ENCODE measurements at regions of chr22 and their contacts with region 1.

Region 1: DNA sequence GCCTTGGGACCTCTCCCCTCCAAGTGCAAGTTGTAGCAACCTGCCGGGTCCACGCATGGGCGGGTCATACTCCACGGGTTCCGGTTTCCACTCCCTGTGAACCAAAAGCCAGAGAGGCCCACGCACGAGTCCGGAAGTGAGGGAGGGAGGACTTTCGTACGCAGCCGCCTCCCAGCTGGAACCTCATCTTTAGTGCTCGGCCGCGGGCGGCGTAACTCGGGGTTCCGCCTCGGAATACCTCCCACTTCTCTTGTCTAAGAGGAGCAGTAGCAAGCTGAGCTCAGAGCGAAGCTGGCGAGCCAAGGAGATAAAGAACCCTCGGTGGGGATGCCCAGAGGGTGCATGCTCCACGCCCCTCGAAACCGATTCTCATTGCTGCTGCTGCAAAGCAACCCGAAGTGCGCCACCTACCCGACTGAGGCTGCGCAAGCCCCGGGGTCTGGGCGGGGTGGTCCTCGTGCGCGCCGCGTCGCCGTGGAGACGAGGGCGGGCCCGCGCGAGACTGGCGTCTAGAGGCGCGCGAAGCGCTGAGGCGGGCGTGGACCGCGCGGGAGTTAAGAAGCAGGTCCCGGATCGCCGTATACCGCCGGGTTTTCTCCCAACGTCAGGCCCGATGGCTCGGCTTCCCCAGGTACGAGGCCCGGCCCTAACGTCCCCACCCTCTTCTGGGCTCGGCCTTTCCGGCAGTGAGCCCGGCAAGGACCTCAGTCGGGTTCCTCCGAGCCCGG is at the start of gene SFI1:
- DNase-seq: peak; percentile 95
- H3K4me3 Mint-ChIP-seq: peak within 1 kb of the TSS; percentile 94
- H3K27ac Mint-ChIP-seq: peak within 1 kb of the TSS; percentile 94
- H3K4me1 Mint-ChIP-seq: peaks cover 55% of the 10 kb centered on the region
- H3K27me3 Mint-ChIP-seq: no peaks in the 10 kb centered on the region
- total RNA-seq, gene SFI1: 147 to 155 TPM

Region 2: DNA sequence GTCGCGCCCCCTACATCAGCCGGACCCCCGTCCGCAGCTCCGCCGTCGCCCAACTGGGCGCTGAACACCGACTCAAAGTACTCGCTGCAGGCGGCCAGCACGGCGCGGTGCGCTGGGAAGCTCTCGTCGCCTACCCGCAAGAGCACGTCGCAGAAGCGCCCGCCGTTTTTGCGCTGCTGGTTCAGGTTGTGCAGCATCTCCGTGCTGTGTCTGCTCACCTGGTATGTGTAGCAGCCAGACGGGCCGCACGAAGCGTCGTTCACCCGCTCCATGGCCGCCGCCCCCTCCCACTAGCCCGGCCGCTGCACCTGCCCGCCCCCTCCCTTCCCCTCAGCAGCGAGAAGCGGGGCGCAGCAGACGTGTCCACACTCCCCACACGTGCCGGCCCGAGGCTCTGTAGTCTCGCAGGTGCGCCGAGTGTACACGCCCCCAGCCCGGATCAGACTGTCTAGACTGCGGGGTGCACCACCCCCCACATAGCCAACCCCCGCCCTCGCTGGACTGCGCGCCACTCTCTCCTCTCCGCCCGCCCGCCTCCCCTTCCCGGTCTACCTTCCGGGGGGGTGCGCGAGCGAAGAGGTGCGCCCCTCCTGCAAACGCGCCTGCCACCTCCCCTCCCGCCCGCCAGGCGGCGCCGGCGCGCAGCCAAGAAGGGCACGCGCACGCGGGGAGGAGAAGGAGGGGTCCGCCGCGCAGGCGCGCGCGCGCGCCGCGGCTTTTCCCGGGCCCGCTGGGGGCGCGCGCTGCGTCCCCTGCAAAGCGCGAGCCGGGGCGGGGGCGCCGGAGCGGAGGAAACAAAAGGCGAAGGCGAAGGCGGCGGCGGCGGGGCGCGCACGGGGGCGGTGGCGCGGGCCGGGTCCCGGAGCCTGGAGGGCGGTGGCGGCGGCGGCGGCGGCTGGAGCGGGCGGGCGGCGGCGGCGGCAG is 150.6 kb before region 1 on chr22:
- CTCF ChIA-PET with region 1: no interaction called
- intact Hi-C with region 1: loop called (anchors 2 kb)
- DNase-seq: peak; percentile 86
- H3K4me3 Mint-ChIP-seq: peak overlapping the region; percentile 90
- H3K27ac Mint-ChIP-seq: peak overlapping the region; percentile 94
- H3K4me1 Mint-ChIP-seq: peaks cover 42% of the 10 kb centered on the region
- H3K27me3 Mint-ChIP-seq: no peaks in the 10 kb centered on the region

Region 3: DNA sequence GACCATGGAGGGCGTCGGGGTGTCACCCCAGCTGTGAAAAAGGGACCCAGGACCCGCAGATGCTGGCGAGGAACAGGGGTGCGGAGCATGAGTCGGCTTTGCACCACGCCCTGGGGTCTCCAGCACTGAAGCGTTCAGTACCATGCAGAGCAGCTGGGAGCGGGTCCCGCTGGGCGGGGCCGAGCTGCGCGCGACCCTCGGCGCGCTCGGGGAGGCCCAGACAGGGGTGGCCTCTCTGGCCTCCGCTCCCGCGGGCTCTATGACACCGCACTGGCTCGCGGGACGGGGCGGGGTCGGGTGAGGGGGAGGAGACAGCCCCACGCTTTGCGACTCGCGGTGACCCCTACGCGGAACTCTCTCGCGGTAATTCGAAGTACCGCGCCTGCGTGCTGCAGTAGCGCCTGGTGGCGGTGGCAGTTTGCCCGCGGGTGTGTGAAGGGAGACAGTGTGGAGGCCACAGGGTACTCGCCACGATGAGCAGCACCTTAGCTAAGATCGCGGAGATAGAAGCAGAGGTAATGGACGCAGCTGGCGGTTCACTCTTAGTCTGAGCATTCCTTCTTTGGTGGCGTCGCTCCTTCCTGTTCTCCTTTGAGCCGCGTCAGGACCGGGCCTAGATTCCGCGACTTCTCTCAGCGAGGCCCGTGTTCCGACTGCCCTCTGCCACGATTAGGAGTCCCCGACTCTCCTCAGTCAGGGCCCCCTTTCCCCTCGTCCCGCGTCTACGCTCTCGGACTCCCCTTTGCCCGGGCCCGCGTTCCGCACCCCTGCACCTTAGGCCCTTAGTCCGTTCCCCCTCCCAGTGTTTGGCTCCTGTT is 96.8 kb before region 1 on chr22 and contains the start of gene DRG1:
- CTCF ChIA-PET with region 1: no interaction called
- intact Hi-C with region 1: loop called (anchors 5 kb)
- DNase-seq: peak; percentile 98
- H3K4me3 Mint-ChIP-seq: peak within 1 kb of the TSS; percentile 92
- H3K27ac Mint-ChIP-seq: peak within 1 kb of the TSS; percentile 82
- H3K4me1 Mint-ChIP-seq: peaks cover 21% of the 10 kb centered on the region
- H3K27me3 Mint-ChIP-seq: no peaks in the 10 kb centered on the region
- total RNA-seq, gene DRG1: 77.1 to 78.7 TPM

Region 4: GRCh38 chr22:31509061-31509762 is 13.0 kb after region 1 on chr22:
- CTCF ChIA-PET with region 1: no interaction called
- intact Hi-C with region 1: no loop called
- DNase-seq: no peak
- H3K4me3 Mint-ChIP-seq: no peak overlapping the region
- H3K27ac Mint-ChIP-seq: peak overlapping the region; percentile 73
- H3K4me1 Mint-ChIP-seq: peaks cover 56% of the 10 kb centered on the region
- H3K27me3 Mint-ChIP-seq: no peaks in the 10 kb centered on the region

Region 5: DNA sequence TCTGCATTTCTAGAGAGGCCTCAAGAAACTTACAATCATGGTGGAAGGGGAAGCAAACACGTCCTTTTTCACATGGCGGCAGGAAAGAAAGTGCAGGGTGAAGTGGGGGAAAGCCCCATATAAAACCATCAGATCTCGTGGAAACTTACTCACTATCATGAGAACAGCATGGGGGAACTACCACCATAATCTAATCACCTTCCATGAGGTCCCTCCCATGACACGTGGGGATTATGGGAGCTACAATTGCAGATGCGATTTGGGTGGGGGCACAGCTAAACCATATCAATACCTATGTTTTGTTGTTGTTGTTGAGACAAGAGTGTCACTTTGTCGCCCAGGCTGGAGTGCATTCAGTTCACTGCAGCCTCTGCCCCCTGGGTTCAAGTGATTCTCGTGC is 30.1 kb after region 1 on chr22:
- CTCF ChIA-PET with region 1: interaction called, 3 read pairs
- intact Hi-C with region 1: loop called (anchors 1 kb)
- DNase-seq: peak; percentile 76
- H3K4me3 Mint-ChIP-seq: no peak overlapping the region
- H3K27ac Mint-ChIP-seq: peak overlapping the region; percentile 94
- H3K4me1 Mint-ChIP-seq: peaks cover 65% of the 10 kb centered on the region
- H3K27me3 Mint-ChIP-seq: no peaks in the 10 kb centered on the region

Region 6: DNA sequence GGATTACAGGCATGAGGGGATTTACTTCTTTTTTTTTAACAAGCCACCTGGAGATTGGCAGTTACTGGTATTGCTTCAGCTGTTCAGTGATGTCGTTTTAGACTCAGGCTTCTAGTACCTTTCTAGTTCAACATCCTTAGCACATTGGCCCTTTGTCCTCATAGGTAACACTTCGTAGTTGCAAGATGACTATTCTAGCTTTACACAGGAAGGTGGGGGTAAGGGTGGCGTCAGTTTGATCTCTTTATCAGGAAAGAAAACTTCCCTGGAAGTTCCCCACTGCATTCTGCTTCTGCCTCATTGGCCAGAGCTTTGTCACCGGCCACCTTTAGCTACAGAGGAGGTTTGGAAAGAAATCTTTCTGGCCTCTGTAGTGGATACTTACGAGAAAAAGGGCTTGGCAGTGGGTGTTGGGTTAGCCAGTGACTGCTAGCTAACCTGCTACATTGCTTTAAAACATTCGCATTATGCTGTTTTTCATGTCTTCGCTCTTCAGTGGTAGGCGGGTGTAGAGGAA is 40.9 kb after region 1 on chr22:
- CTCF ChIA-PET with region 1: interaction called, 4 read pairs
- intact Hi-C with region 1: loop called (anchors 1 kb)
- DNase-seq: peak; percentile 79
- H3K4me3 Mint-ChIP-seq: peak overlapping the region; percentile 8
- H3K27ac Mint-ChIP-seq: peak overlapping the region; percentile 89
- H3K4me1 Mint-ChIP-seq: peaks cover 64% of the 10 kb centered on the region
- H3K27me3 Mint-ChIP-seq: no peaks in the 10 kb centered on the region

Region 7: DNA sequence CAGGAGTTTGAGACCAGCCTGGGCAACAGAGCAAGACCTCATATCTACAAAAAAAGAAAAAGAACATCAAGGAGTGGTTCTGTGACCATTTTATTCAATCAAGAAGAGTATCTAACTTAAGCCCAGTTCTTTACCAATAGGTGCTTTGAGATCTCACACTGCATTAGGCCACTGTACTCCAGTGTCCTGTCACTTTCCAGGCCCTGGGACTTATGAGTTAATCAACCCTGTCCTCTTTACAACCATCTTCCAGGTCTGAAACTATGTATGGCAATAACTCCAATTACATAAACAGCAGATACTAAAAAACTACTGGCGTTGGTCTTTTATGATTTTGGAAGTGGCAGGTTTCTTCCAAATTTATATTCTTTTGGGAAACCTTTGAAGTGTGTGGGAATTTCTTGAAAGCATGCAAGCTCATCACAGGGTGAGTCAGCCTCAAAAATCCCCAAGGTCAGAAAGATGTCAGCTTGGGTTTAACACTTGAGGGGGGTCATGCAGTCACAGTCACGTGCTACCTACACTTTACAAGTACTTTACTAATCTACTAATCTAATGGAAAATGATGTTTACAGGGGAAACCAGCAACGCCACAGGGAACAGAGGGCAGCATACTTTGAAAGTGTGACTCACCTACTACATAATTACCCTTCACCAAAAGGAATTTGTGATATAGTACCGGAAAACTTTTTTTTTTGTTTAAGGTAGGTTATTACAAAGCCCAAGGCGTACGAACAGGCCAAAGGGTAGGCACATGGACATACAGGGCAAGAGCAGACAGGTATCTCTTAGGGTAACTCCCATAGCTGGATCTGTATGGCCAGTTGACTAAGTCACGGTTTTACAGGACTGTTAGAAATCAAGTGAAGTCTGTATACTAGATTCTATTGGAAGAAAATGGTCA is 150.3 kb after region 1 on chr22:
- CTCF ChIA-PET with region 1: no interaction called
- intact Hi-C with region 1: loop called (anchors 1 kb)
- DNase-seq: peak; percentile 76
- H3K4me3 Mint-ChIP-seq: no peak overlapping the region
- H3K27ac Mint-ChIP-seq: peak overlapping the region; percentile 91
- H3K4me1 Mint-ChIP-seq: peaks cover 53% of the 10 kb centered on the region
- H3K27me3 Mint-ChIP-seq: no peaks in the 10 kb centered on the region

Region 8: DNA sequence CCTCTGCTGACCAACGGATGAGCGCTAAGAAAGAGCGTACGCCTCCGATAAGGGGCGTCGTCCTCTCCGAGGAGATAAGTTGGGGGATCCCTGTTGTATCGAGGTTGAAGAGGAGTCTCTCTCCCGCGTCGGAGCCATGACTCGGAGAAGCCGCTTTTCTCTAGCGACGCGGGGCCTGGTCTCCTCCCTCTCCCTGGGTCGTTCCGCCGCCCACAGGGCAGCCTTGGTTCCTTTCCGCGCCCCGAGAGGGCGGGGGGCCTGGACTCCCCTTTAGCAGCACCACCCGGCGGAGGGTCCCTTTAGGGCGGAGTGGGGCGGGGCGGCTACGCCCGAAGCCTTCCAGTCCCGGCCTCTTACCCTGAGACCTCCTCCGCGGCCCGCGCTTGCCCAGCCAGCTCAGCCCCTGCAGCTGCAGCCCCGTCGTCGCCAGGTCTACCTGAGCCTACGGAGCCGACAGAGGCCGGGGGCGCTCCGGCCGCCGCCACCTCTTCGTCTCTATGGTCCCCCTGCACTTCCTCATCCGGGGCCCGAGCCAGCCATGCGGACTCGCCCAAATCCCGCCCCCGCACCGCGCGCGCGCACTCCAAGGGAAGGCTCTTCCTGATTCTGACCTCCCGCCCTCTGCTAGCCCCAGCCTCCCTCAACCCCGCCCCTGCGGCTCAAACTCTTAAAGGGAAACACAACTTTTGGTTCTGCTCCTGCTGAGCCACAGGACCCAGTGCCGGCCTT is 253.6 kb after region 1 on chr22 and contains the start of gene PRR14L:
- CTCF ChIA-PET with region 1: no interaction called
- intact Hi-C with region 1: loop called (anchors 1 kb)
- DNase-seq: peak; percentile 99
- H3K4me3 Mint-ChIP-seq: peak within 1 kb of the TSS; percentile 87
- H3K27ac Mint-ChIP-seq: peak within 1 kb of the TSS; percentile 93
- H3K4me1 Mint-ChIP-seq: peaks cover 55% of the 10 kb centered on the region
- H3K27me3 Mint-ChIP-seq: no peaks in the 10 kb centered on the region
- total RNA-seq, gene PRR14L: 28.7 to 31.8 TPM